ENCODE measurements at regions of chr16 and their contacts with region 1.

Region 1: DNA sequence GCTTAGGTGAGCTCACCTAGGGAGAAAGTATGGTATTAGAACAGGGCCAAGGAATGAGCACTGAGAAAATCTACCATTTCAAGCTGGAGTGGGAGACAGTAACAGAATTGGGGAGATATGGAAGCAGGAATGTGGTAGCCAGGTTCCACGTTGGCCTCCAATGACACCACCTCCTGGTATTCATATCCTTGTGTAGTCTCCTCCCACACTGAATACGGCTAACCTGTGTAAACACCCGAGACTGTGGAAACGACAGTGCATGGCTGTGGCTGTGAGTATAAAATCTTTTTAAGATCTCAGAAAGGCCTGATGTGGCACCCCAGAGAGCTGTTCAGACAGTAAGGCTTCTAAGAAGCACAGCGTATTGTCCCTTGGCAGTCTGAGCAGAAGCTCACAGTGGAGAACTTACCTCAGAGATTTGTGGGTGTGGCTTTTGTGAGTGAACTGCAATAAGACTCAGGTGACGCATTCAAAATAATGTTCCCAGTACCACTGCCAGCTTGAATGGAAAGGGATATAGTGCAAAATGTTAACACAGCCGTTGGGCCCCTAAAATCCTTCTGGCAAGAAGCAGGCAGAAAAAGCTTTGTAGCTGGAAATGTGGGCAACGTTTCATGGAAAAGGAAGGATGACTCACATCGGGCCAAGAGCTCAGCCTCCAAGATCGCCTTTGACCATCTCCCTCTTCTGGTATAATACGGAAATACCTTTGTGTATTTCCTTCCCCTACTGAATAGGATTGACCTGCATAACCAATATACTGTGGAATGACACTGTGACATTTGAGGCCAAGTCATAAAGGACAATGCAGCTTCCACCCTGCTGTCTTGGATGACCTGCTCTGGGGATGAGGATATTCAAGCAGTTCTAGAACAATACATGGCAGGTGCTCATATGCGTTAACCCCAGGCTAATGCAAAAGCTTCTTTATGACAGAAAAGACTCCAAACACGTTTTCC is 14.3 kb downstream of the SDR42E1 start:
- DNase-seq: no peak
- H3K4me3 ChIP-seq: no peak overlapping the region
- H3K27ac ChIP-seq: no peak overlapping the region
- H3K4me1 ChIP-seq: peaks cover 0 to 7% (median 0%) of the 10 kb centered on the region in 4 experiments; a peak in 2 of 7 replicates
- H3K27me3 ChIP-seq: no peaks in the 10 kb centered on the region
- CTCF ChIP-seq: peak in 2 of 3 experiments; percentile 51 to 59; a peak in 3 of 4 replicates
- EP300 ChIP-seq: no peak
- POLR2A ChIP-seq: no peak
- RAD21 ChIP-seq: peak; percentile 52 to 59

Region 2: DNA sequence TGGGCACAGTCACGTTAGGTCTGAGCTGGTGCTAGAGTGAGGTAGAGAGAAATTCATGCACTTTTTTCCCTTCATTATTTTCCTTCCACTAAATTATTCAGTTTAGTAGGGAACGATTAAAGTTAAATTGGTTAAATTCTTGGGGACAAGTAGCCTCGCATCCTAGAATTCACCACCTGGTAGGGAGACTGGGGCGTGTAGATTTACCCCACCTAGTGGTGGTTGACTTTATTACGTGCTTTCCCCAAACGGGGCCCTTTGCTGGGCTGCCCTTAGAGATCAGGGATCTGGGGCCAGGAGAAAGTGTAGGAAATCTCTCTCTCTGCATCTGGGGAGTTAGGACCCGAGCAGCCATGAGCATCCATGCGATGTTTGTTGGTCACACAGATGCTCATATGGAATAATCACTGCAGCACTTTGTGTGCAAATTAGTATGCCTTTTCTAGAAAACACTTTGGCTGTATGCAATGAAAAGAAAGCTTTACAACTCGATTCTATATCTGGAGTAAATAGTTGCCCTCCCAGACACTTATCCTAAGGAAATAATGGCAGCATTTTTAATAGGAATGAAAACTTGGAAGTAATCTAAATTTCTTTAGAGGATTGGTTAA is 110.9 kb before region 1 on chr16:
- CTCF ChIA-PET with region 1: interaction called, 12 read pairs
- POLR2A ChIA-PET with region 1: no interaction called
- DNase-seq: peak; percentile 36 to 77
- H3K4me3 ChIP-seq: no peak overlapping the region
- H3K27ac ChIP-seq: no peak overlapping the region
- H3K4me1 ChIP-seq: peaks cover 0 to 3% (median 1%) of the 10 kb centered on the region in 4 experiments; a peak in 1 of 7 replicates
- H3K27me3 ChIP-seq: no peaks in the 10 kb centered on the region
- CTCF ChIP-seq: peak; percentile 58 to 77 (median 75)
- EP300 ChIP-seq: no peak
- POLR2A ChIP-seq: no peak
- RAD21 ChIP-seq: peak; percentile 60 to 71

Region 3: GRCh38 chr16:81928975-81929374 is 68.0 kb before region 1 on chr16:
- CTCF ChIA-PET with region 1: interaction called, 14 read pairs
- POLR2A ChIA-PET with region 1: no interaction called
- DNase-seq: peak in 1 of 2 experiments; percentile 43
- H3K4me3 ChIP-seq: no peak overlapping the region
- H3K27ac ChIP-seq: no peak overlapping the region
- H3K4me1 ChIP-seq: peaks cover 0 to 2% (median 0%) of the 10 kb centered on the region in 4 experiments; a peak in 2 of 7 replicates
- H3K27me3 ChIP-seq: no peaks in the 10 kb centered on the region
- CTCF ChIP-seq: no peak
- EP300 ChIP-seq: no peak
- POLR2A ChIP-seq: no peak
- RAD21 ChIP-seq: no peak

Region 4: DNA sequence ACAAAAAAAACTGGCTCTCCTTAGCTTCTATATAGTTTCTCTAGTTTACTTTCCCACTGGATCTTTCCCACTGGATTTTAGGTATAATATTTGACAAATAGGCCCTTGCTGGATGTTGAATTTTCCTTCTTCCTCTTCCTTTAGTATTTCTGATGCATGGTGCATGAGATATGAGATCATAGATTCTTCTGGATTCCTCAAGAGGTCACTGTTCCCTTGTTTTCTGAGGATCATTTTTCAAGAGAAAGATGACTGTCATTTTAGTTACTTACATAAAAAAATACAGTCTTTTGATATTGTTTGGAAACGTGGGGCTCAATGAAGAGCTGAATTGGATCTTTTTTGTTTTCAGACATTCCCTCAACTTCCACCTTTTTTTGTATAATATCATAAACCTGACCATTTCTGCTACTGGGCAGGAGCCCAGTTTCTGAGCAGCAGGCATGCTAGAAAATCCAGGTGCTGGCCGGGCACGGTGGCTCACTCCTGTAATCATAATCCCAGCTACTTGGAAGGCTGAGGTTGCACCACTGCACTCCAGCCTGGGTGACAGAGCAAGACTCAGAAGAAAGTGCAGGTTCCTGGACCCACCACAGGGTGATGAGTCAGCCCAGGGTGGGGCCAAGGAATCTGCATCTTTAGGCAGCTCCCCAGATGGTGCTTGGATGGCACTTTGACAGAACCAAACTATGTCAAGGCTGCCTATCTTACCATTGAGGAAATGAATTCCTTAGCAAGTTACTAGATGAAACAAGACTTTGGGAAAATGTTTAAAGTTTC is 56.0 kb before region 1 on chr16:
- CTCF ChIA-PET with region 1: interaction called, 98 read pairs
- POLR2A ChIA-PET with region 1: no interaction called
- DNase-seq: peak in 1 of 2 experiments; percentile 45
- H3K4me3 ChIP-seq: no peak overlapping the region
- H3K27ac ChIP-seq: no peak overlapping the region
- H3K4me1 ChIP-seq: peaks cover 7 to 31% (median 29%) of the 10 kb centered on the region in 4 experiments
- H3K27me3 ChIP-seq: 0 out of 7 replicates have a peak, but pooled peaks cover 0 to 2% (median 0%) of the 10 kb centered on the region in 4 experiments
- CTCF ChIP-seq: peak in 2 of 3 experiments; percentile 20 to 43; a peak in 2 of 4 replicates
- EP300 ChIP-seq: no peak
- POLR2A ChIP-seq: no peak
- RAD21 ChIP-seq: peak; percentile 62 to 64

Region 5: DNA sequence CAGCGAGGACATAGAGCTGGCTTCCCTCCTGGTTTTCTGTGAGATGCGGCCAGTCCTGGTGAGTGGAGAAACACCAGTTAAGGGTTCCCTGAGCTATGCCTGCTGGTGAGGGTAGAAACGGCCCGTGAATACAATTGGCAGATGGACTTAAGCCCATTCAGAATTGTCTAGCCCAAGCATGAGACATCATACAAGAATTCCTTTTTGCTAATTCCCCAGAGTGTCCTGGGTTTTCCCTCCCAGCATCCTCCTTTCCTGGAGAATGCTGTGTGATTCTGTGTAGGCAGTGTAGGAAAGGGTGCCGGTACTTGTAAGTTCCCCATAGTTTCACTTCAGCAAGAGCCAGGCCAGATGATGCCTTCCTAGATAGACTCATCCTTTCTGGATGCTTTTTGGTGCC is 50.7 kb before region 1 on chr16:
- CTCF ChIA-PET with region 1: interaction called, 98 read pairs
- POLR2A ChIA-PET with region 1: no interaction called
- DNase-seq: no peak
- H3K4me3 ChIP-seq: no peak overlapping the region
- H3K27ac ChIP-seq: no peak overlapping the region
- H3K4me1 ChIP-seq: peaks cover under 1 to 17% (median 9%) of the 10 kb centered on the region in 4 experiments; a peak in 5 of 7 replicates
- H3K27me3 ChIP-seq: peaks cover 0 to 2% (median 0%) of the 10 kb centered on the region in 4 experiments; a peak in 1 of 7 replicates
- CTCF ChIP-seq: no peak
- EP300 ChIP-seq: no peak
- POLR2A ChIP-seq: no peak
- RAD21 ChIP-seq: no peak

Region 6: DNA sequence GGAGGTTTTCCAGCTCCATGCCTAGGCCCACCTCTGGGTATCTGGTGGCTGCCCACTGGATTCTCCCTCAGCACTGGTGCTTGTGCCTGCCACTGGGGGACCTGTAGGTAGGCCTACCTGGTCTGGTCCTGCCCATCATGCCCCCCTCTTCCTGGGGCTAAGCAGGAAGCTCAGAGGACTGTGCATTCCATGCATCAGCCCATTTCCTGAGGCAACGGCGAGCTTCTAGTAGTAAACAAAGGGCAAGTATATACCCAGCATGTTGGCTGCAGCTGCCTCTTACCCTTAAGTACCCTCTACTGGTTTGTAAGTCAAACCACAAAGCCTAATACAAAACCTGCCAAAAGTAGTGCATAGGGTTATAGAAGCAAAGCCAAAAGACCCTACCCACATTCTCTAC is 23.2 kb before region 1 on chr16:
- CTCF ChIA-PET with region 1: interaction called, 15 read pairs
- POLR2A ChIA-PET with region 1: no interaction called
- DNase-seq: peak in 1 of 2 experiments; percentile 33
- H3K4me3 ChIP-seq: no peak overlapping the region
- H3K27ac ChIP-seq: no peak overlapping the region
- H3K4me1 ChIP-seq: peaks cover 0 to 8% (median 5%) of the 10 kb centered on the region in 4 experiments; a peak in 4 of 7 replicates
- H3K27me3 ChIP-seq: no peaks in the 10 kb centered on the region; a peak in 1 of 7 replicates
- CTCF ChIP-seq: peak in 1 of 3 experiments; percentile 6; a peak in 1 of 4 replicates
- EP300 ChIP-seq: no peak
- POLR2A ChIP-seq: no peak
- RAD21 ChIP-seq: peak in 1 of 2 experiments; percentile 10; a peak in 1 of 4 replicates

Region 7: GRCh38 chr16:82016263-82016662 is 19.3 kb after region 1 on chr16:
- CTCF ChIA-PET with region 1: interaction called, 16 read pairs
- POLR2A ChIA-PET with region 1: no interaction called
- DNase-seq: no peak
- H3K4me3 ChIP-seq: no peak overlapping the region
- H3K27ac ChIP-seq: no peak overlapping the region
- H3K4me1 ChIP-seq: no peaks in the 10 kb centered on the region
- H3K27me3 ChIP-seq: no peaks in the 10 kb centered on the region; a peak in 2 of 7 replicates
- CTCF ChIP-seq: peak in 2 of 3 experiments; percentile 27 to 43; a peak in 2 of 4 replicates
- EP300 ChIP-seq: no peak
- POLR2A ChIP-seq: no peak
- RAD21 ChIP-seq: peak in 1 of 2 experiments; percentile 30; a peak in 2 of 4 replicates

Measured in H1 (cell line).